Activated naive CD4-positive, alpha-beta T cell treated with anti-CD3 and anti-CD28 coated beads for 36 hours (primary cell): ENCODE measurements at regions of chr5 and their contacts with region 1.

Region 1: DNA sequence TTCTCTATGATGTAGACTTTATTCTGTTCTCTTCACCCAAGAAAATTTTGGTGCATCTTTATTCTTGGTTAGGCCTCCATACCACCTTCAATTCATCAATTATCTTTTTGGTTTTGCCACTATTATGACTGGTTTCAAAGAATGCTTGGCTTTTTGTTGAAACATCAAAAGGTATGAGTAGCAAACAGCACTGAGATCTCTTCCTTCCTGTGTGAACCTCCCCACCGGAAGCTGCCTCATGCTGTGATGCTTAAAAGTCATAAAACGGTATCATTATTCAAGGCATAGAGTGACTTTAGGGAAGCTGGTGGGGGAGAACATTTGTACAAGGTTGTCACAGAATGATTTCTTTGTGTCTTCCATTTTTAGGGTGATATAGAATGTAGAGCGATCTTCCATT is 70.6 kb downstream of the IQGAP2 start:
- DNase-seq: peak; percentile 90
- H3K4me3 Mint-ChIP-seq: peak overlapping the region; percentile 38
- H3K27ac Mint-ChIP-seq: peak overlapping the region; percentile 92
- H3K4me1 Mint-ChIP-seq: peaks cover 76% of the 10 kb centered on the region
- H3K27me3 Mint-ChIP-seq: no peaks in the 10 kb centered on the region

Region 2: GRCh38 chr5:75965292-75965691 is 508.4 kb before region 1 on chr5:
- CTCF ChIA-PET with region 1: no interaction called
- intact Hi-C with region 1: no loop called
- DNase-seq: no peak
- H3K4me3 Mint-ChIP-seq: no peak overlapping the region
- H3K27ac Mint-ChIP-seq: no peak overlapping the region
- H3K4me1 Mint-ChIP-seq: no peaks in the 10 kb centered on the region
- H3K27me3 Mint-ChIP-seq: peaks cover 21% of the 10 kb centered on the region

Region 3: GRCh38 chr5:76337953-76338451 is 135.7 kb before region 1 on chr5:
- CTCF ChIA-PET with region 1: no interaction called
- intact Hi-C with region 1: loop called (anchors 10 kb)
- DNase-seq: peak; percentile 62
- H3K4me3 Mint-ChIP-seq: no peak overlapping the region
- H3K27ac Mint-ChIP-seq: no peak overlapping the region
- H3K4me1 Mint-ChIP-seq: peaks cover 18% of the 10 kb centered on the region
- H3K27me3 Mint-ChIP-seq: no peaks in the 10 kb centered on the region

Region 4: DNA sequence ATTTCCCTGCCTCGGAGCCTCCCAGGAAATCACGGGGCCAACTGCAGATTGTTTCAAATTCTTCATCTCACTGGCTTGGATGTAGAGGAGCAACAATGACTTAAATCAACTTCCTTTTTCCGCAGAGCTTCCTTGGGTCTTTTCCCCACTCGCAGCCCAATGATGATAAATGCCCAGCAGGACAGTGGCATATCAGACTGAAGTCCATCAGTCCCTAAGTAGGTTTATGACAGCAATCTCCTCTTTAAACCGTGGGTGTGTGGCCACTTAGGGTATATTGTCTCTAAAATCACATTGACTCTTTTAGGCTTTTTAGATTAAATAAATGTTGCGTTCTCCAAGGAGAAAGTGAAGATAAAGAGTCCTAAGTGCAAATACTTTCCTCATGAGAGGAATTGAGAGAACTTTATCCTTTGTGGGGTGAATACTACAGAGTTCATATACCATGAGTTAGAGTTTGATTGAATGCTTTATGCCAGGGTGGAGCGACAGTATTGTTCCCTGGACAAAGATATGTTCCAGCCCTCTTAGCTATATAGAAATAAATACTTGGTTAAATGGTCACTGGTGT is 11.5 kb before region 1 on chr5:
- CTCF ChIA-PET with region 1: interaction called, 10 read pairs
- intact Hi-C with region 1: no loop called
- DNase-seq: no peak
- H3K4me3 Mint-ChIP-seq: no peak overlapping the region
- H3K27ac Mint-ChIP-seq: no peak overlapping the region
- H3K4me1 Mint-ChIP-seq: peaks cover 49% of the 10 kb centered on the region
- H3K27me3 Mint-ChIP-seq: no peaks in the 10 kb centered on the region

Region 5: GRCh38 chr5:76521240-76521758 is 47.6 kb after region 1 on chr5:
- CTCF ChIA-PET with region 1: interaction called, 3 read pairs
- intact Hi-C with region 1: loop called (anchors 1 kb)
- DNase-seq: no peak
- H3K4me3 Mint-ChIP-seq: no peak overlapping the region
- H3K27ac Mint-ChIP-seq: peak overlapping the region; percentile 83
- H3K4me1 Mint-ChIP-seq: peaks cover 71% of the 10 kb centered on the region
- H3K27me3 Mint-ChIP-seq: no peaks in the 10 kb centered on the region